HCT116 (cell line): ENCODE measurements at regions of chr16 and their contacts with region 1.

Region 1: DNA sequence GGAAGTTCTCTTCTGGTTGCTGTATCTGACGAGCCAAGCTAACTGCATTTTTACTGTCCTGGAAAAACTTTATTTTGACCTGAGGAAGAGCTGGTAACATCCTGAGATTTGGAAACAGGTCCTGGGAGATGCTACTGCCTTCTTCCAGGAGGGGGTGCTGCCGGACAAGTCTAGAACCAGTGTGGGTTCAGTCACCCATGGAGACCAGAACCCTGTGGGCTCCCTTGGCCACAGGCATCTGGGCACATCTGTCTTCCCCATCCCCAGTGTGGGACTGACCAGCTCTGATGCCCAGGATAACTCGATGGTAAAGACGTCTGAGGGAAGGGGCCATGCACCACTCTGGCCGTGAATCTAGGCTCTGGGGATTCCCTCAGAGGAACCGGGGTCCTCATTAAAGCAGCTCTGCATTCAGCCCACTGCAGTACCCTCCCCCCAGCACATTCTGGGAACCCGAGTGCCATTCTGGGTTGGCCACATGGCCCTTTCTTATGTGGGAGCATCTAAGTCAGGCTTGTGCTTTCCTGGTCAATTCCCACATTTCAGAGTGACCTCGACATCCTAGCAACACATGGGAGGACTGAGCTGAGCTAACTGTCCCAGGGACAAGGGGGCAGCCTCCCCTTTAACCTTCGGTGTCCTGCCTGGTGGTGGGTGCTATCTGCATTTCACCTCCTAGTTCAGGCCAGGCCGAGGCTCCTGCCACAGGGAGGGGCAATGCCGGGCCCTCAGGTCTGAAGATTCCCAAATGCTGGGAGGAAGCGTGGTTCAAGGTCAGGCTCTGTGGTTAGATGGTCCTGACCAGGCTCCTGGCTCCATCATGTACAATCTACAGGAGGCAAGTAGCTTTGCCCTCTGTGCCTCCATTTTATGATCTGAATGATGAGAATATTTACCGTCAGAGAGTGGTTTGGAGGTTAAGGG is 6.4 kb downstream of the C16orf86 start:
- DNase-seq: peak; percentile 42
- ATAC-seq: peak; percentile 63
- H3K4me3 ChIP-seq: no peak overlapping the region
- H3K27ac ChIP-seq: no peak overlapping the region
- H3K4me1 ChIP-seq: peaks cover 0 to 10% of the 10 kb centered on the region in 2 experiments; a peak in 2 of 4 replicates
- H3K27me3 ChIP-seq: no peaks in the 10 kb centered on the region
- CTCF ChIP-seq: peak; percentile 78 to 92 (median 90); a peak in 5 of 6 replicates
- POLR2A ChIP-seq: no peak
- RAD21 ChIP-seq: peak; percentile 93

Region 2: GRCh38 chr16:67781565-67781921 is 108.5 kb after region 1 on chr16:
- CTCF ChIA-PET with region 1: no interaction called
- POLR2A ChIA-PET with region 1: no interaction called
- RAD21 ChIA-PET with region 1: no interaction called
- intact Hi-C with region 1: no loop called
- DNase-seq: no peak
- ATAC-seq: no peak
- H3K4me3 ChIP-seq: no peak overlapping the region
- H3K27ac ChIP-seq: no peak overlapping the region
- H3K4me1 ChIP-seq: peaks cover 0 to 7% of the 10 kb centered on the region in 2 experiments; a peak in 1 of 4 replicates
- H3K27me3 ChIP-seq: no peaks in the 10 kb centered on the region
- CTCF ChIP-seq: no peak
- POLR2A ChIP-seq: no peak
- RAD21 ChIP-seq: no peak

Region 3: DNA sequence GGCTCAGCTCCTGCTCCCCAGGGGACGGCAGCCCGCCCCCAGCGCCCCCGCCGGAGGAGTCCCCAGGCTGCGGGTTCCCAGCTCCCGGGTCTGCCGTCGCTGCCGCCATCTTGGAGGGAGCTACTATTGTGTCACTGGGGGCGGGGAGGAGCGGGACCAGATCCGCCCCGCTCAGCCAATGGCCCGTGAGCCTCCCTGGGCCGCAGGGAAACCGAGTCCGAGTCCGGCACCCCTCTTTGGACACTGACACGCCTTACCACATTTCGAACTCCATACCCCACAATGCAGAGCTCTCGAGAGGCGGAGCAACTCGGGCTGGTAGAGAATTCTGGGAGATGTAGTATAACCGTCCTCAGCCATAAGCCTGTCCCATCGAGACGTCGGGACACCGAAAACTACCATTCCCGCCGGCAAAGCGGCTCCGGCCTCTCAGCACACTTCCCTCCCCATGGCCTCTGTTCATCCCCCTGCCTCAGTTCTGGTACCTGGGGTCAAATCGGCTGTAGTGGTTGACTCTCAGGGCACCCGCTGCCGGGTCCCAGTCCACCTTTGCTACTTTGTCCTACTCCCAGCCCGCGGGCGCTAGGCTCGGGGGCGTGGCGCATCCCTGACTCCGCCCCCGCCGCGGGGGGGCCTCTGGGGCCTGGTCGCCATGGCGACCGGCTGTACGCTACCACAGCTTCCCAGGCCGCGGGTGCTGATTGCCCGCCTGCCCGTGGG is 133.6 kb after region 1 on chr16 and contains the starts of genes RANBP10 and TSNAXIP1:
- CTCF ChIA-PET with region 1: interaction called, 6 read pairs
- POLR2A ChIA-PET with region 1: no interaction called
- RAD21 ChIA-PET with region 1: interaction called in 1 of 2 experiments, 3 read pairs
- intact Hi-C with region 1: loop called (anchors 5 kb)
- DNase-seq: peak; percentile 98
- ATAC-seq: peak; percentile 95
- H3K4me3 ChIP-seq: peak within 1 kb of the TSS; percentile 98 to 100
- H3K27ac ChIP-seq: peak within 1 kb of the TSS; percentile 68
- H3K4me1 ChIP-seq: peaks cover 12 to 23% of the 10 kb centered on the region in 2 experiments
- H3K27me3 ChIP-seq: no peaks in the 10 kb centered on the region
- CTCF ChIP-seq: no peak
- POLR2A ChIP-seq: peak; percentile 78
- RAD21 ChIP-seq: no peak
- total RNA-seq, gene RANBP10: 16.9 TPM
- total RNA-seq, gene TSNAXIP1: 1.2 TPM

Region 4: DNA sequence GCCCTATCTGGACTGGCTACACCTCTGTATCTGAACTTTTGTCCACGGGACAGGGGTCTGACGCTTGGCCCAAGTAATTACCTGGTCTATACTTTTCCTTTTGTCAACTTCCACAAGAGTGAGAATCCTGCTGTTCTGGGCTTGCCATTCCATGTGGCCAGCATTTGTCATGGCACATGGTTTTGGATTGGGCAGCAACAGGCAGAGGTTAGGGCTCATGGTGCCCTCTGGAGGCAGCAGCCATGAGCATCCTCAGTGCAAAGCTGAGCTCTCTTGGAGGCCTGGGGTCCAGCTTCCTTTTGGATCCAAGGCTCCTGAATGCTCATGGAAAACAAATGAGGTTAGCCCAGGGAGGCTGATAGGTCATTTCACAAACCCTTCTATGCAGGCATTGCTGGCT is 192.3 kb after region 1 on chr16:
- CTCF ChIA-PET with region 1: interaction called, 15 read pairs
- POLR2A ChIA-PET with region 1: no interaction called
- RAD21 ChIA-PET with region 1: no interaction called
- intact Hi-C with region 1: loop called (anchors 2 kb)
- DNase-seq: no peak
- ATAC-seq: peak; percentile 90
- H3K4me3 ChIP-seq: no peak overlapping the region
- H3K27ac ChIP-seq: peak overlapping the region; percentile 0; the same call in 1 of the 2 replicates
- H3K4me1 ChIP-seq: peaks cover 8 to 42% of the 10 kb centered on the region in 2 experiments; a peak in 3 of 4 replicates
- H3K27me3 ChIP-seq: no peaks in the 10 kb centered on the region
- CTCF ChIP-seq: peak; percentile 55 to 84 (median 59); a peak in 5 of 6 replicates
- POLR2A ChIP-seq: no peak
- RAD21 ChIP-seq: peak; percentile 72

Region 5: GRCh38 chr16:67928561-67929364 is 255.8 kb after region 1 on chr16:
- CTCF ChIA-PET with region 1: interaction called, 4 read pairs
- POLR2A ChIA-PET with region 1: no interaction called
- RAD21 ChIA-PET with region 1: no interaction called
- intact Hi-C with region 1: loop called (anchors 1 kb)
- DNase-seq: peak; percentile 24
- ATAC-seq: peak; percentile 88
- H3K4me3 ChIP-seq: no peak overlapping the region
- H3K27ac ChIP-seq: no peak overlapping the region
- H3K4me1 ChIP-seq: no peaks in the 10 kb centered on the region; a peak in 1 of 4 replicates
- H3K27me3 ChIP-seq: no peaks in the 10 kb centered on the region
- CTCF ChIP-seq: peak; percentile 95 to 98 (median 96)
- POLR2A ChIP-seq: no peak
- RAD21 ChIP-seq: peak; percentile 94

Region 6: GRCh38 chr16:68040507-68041288 is 367.7 kb after region 1 on chr16:
- CTCF ChIA-PET with region 1: interaction called, 4 read pairs
- POLR2A ChIA-PET with region 1: no interaction called
- RAD21 ChIA-PET with region 1: no interaction called
- intact Hi-C with region 1: loop called (anchors 5 kb)
- DNase-seq: peak; percentile 63
- ATAC-seq: peak; percentile 99
- H3K4me3 ChIP-seq: no peak overlapping the region
- H3K27ac ChIP-seq: no peak overlapping the region
- H3K4me1 ChIP-seq: peaks cover 4 to 5% of the 10 kb centered on the region in 2 experiments; a peak in 1 of 4 replicates
- H3K27me3 ChIP-seq: no peaks in the 10 kb centered on the region
- CTCF ChIP-seq: peak; percentile 90 to 96 (median 93)
- POLR2A ChIP-seq: no peak
- RAD21 ChIP-seq: peak; percentile 95